ENCODE measurements at regions of chr3 and their contacts with region 1.

Region 1: GRCh38 chr3:21120826-21121225 is 630.2 kb downstream of the ZNF385D start:
- DNase-seq: no peak
- H3K4me3 ChIP-seq: no peak overlapping the region
- H3K27ac ChIP-seq: no peak overlapping the region
- H3K4me1 ChIP-seq: no peaks in the 10 kb centered on the region
- H3K27me3 ChIP-seq: no peaks in the 10 kb centered on the region
- CTCF ChIP-seq: no peak

Region 2: GRCh38 chr3:20652231-20652986 is 468.4 kb before region 1 on chr3:
- CTCF ChIA-PET with region 1: no interaction called
- POLR2A ChIA-PET with region 1: no interaction called
- intact Hi-C with region 1: no loop called
- DNase-seq: no peak
- H3K4me3 ChIP-seq: no peak overlapping the region
- H3K27ac ChIP-seq: no peak overlapping the region
- H3K4me1 ChIP-seq: no peaks in the 10 kb centered on the region
- H3K27me3 ChIP-seq: no peaks in the 10 kb centered on the region
- CTCF ChIP-seq: no peak

Region 3: DNA sequence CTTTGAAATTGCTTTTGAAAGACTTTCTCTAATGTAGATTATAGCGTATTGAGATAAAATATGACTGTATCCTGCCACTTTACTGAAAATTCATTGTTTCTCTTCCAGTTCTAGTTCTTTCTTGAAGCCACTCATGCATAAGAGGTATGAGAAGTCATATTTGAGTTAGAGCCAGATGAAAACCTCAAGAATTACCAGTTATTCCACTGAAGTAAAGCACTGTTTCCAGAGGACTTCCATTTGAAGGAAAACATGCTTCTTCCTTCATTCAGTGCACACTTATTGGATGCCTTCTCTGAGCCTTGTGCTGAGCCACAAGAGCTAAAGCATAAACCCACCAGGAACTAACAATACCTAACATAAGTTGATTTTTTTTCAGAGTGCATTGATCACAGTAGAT is 116.8 kb after region 1 on chr3:
- CTCF ChIA-PET with region 1: no interaction called
- POLR2A ChIA-PET with region 1: no interaction called
- intact Hi-C with region 1: loop called (anchors 10 kb)
- DNase-seq: no peak
- H3K4me3 ChIP-seq: no peak overlapping the region
- H3K27ac ChIP-seq: no peak overlapping the region
- H3K4me1 ChIP-seq: no peaks in the 10 kb centered on the region
- H3K27me3 ChIP-seq: no peaks in the 10 kb centered on the region
- CTCF ChIP-seq: no peak